G401 (cell line): ENCODE measurements at regions of chr3 and their contacts with region 1.

Region 1: DNA sequence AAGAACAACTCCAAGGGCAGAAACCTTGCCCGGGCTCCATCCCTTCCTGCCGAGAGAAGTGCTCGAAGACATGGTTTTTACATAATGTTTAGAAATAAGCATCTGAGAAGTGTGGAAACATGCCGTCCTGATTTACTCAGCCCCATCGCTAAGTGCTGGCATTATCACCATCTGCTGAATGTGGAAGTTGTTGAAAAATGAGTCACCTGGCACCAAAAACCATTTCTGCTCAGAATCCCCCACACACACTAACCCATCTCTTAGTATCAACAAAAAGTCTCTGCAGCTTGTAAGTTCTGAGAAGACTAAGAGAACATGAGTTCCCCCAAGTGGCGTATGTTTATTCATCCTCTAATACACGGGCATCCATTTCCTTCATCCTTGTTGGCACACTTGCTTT is 51.0 kb upstream of the ARL8B start:
- DNase-seq: no peak

Region 2: GRCh38 chr3:4736284-4736861 is 334.7 kb before region 1 on chr3:
- in situ Hi-C with region 1: loop called (anchors 10 kb)
- DNase-seq: no peak

Region 3: GRCh38 chr3:4978204-4978965 is 92.7 kb before region 1 on chr3:
- in situ Hi-C with region 1: no loop called
- DNase-seq: peak; percentile 88

Region 4: GRCh38 chr3:5026331-5027218 is 44.5 kb before region 1 on chr3:
- in situ Hi-C with region 1: no loop called
- DNase-seq: peak; percentile 88